OCI-LY7 (cell line): ENCODE measurements at regions of chr22 and their contacts with region 1.

Region 1: GRCh38 chr22:41857155-41857859 is 24.4 kb downstream of the SREBF2 start:
- DNase-seq: peak; percentile 81
- H3K4me3 ChIP-seq: no peak overlapping the region
- H3K27ac ChIP-seq: peak overlapping the region; percentile 98
- H3K4me1 ChIP-seq: peaks cover 82% of the 10 kb centered on the region
- CTCF ChIP-seq: peak; percentile 94

Region 2: DNA sequence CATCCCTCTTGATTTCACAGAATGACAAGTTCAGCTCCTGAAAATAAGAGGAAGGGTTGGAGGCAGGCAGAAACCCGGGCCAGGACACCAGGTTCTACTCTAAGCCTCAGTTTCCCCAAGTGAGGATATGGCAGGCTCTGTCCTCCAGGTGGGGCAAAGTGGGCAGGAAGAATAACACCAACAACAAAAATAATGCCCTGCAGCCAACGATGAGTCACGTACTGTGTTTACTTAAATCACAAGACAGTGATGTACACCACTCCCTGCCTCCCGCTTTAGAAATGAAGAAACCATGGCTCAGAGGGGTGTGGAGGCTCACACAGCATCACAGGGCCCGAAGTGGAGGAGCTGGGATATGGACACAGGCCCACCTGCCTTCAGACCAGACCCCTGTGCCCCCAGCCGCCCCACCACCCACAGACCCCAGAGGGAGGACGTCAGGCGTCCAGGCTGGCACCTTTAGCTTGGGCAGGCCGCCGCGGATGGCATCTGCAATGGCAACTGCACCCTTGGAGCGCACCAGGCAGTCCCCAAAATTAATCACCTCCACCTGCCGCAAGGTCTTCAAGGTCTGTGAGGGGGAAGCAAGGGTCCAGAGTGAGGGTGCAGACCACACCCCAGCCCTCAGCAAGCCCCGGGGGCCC is 600.9 kb before region 1 on chr22:
- CTCF ChIA-PET with region 1: no interaction called
- POLR2A ChIA-PET with region 1: no interaction called
- intact Hi-C with region 1: no loop called
- DNase-seq: no peak
- H3K4me3 ChIP-seq: no peak overlapping the region
- H3K27ac ChIP-seq: no peak overlapping the region
- H3K4me1 ChIP-seq: no peaks in the 10 kb centered on the region
- CTCF ChIP-seq: no peak

Region 3: DNA sequence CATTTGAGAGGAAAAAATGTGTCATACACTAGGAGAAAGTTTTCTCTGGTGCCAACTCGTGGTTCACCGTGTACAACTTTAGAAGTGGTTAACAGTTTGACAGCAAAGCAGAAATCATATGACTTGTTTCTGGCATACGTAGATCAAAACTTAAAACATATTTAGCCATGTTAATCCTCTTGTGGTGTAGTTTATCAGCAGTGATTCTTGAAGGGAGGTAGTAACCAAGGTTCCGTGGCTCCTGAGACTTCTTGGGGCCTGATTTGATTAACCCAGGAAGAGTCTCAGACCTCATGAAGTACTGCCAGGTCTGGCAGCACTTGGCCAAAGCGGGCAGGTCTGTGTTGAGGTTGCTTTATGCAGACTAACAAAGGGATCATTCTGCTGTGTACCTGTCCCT is 16.1 kb after region 1 on chr22:
- CTCF ChIA-PET with region 1: no interaction called
- POLR2A ChIA-PET with region 1: interaction called, 10 read pairs
- intact Hi-C with region 1: no loop called
- DNase-seq: no peak
- H3K4me3 ChIP-seq: no peak overlapping the region
- H3K27ac ChIP-seq: no peak overlapping the region
- H3K4me1 ChIP-seq: no peaks in the 10 kb centered on the region
- CTCF ChIP-seq: no peak